SK-N-SH (cell line): ENCODE measurements at regions of chr4 and their contacts with region 1.

Region 1: GRCh38 chr4:91113130-91113706 is 986.0 kb downstream of the CCSER1 start:
- DNase-seq: peak; percentile 28
- H3K4me3 ChIP-seq: no peak overlapping the region; a peak in 1 of 4 replicates
- H3K27ac ChIP-seq: no peak overlapping the region
- H3K4me1 ChIP-seq: no peaks in the 10 kb centered on the region
- H3K27me3 ChIP-seq: no peaks in the 10 kb centered on the region
- CTCF ChIP-seq: peak; percentile 88
- EP300 ChIP-seq: no peak
- RAD21 ChIP-seq: peak; percentile 80

Region 2: DNA sequence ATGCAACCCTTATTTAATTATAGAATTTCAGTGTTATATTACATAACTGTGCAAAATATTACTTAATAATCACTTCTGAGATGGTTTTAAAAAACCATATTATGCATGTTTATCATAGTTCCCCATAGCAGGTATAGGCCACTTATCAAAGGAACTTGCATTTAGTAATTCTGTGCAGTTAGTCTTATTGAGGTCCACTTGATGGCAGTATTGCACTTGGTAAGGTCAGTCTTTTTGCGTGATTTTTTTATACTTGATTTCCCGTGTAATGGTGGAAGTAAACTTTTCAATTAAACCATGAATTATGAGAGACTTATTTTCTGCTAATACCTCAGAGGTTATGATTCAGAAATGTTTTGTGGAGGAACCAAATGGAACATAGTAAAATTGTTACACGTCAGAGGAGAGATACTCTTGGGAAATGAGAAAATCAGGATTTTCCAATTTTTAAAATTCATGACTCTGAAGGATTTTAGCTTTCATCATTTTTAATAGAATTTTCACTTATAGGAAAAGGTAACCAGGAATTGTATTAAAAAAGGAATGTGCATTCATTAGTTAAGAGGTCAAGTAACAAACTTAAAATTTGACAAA is 756.0 kb before region 1 on chr4:
- CTCF ChIA-PET with region 1: interaction called, 10 read pairs
- POLR2A ChIA-PET with region 1: no interaction called
- DNase-seq: peak; percentile 47
- H3K4me3 ChIP-seq: peak overlapping the region in 1 of 2 experiments; percentile 9; a peak in 1 of 4 replicates
- H3K27ac ChIP-seq: no peak overlapping the region
- H3K4me1 ChIP-seq: no peaks in the 10 kb centered on the region; a peak in 1 of 4 replicates
- H3K27me3 ChIP-seq: no peaks in the 10 kb centered on the region
- CTCF ChIP-seq: peak; percentile 78
- EP300 ChIP-seq: no peak
- RAD21 ChIP-seq: peak; percentile 94

Region 3: DNA sequence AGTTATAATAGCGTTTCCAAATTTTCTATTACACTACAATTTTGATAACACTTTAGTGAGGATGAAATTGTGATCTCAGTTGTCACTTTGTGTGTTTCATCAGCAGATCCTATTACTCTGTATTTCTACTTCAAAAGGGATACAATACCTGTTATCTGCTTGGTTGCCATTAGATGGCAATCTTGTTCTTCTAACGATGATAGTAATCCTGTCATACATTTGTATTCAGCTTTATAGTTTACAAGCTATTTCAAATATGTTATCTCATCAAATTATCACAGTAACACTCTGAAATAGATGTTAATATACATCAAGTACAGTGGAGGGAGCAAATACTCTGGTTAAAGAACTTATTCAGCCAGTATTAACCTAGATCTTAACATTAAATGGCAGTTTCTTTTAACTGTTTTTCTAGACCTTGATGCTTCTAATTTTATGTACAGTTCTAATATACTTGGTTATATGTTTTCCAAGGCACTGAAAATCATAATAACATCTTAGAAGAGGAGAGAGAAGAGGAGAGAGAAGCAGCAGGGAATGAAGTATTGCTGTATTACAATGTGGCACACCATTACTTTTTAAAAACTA is 694.0 kb before region 1 on chr4:
- CTCF ChIA-PET with region 1: interaction called, 17 read pairs
- POLR2A ChIA-PET with region 1: no interaction called
- DNase-seq: peak; percentile 52
- H3K4me3 ChIP-seq: peak overlapping the region in 1 of 2 experiments; percentile 3; a peak in 1 of 4 replicates
- H3K27ac ChIP-seq: no peak overlapping the region
- H3K4me1 ChIP-seq: no peaks in the 10 kb centered on the region; a peak in 1 of 4 replicates
- H3K27me3 ChIP-seq: no peaks in the 10 kb centered on the region
- CTCF ChIP-seq: peak; percentile 77
- EP300 ChIP-seq: no peak
- RAD21 ChIP-seq: peak; percentile 89